ENCODE measurements at regions of chr6 and their contacts with region 1.

Region 1: GRCh38 chr6:139375232-139376016 is 976 bp upstream of the CITED2 start:
- DNase-seq: peak; percentile 81
- ATAC-seq: peak; percentile 51
- H3K4me3 Mint-ChIP-seq: peak overlapping the region; percentile 99
- H3K27ac Mint-ChIP-seq: peak overlapping the region; percentile 95
- H3K4me1 Mint-ChIP-seq: peaks cover 27% of the 10 kb centered on the region
- H3K27me3 Mint-ChIP-seq: no peaks in the 10 kb centered on the region
- CTCF ChIP-seq: no peak

Region 2: GRCh38 chr6:138773177-138774091 is 602.0 kb before region 1 on chr6 and contains the start of gene CCDC28A:
- CTCF ChIA-PET with region 1: no interaction called
- POLR2A ChIA-PET with region 1: interaction called, 19 read pairs
- intact Hi-C with region 1: loop called (anchors 1 kb)
- DNase-seq: peak; percentile 90
- ATAC-seq: peak; percentile 85
- H3K4me3 Mint-ChIP-seq: peak within 1 kb of the TSS; percentile 100
- H3K27ac Mint-ChIP-seq: peak within 1 kb of the TSS; percentile 100
- H3K4me1 Mint-ChIP-seq: peaks cover 28% of the 10 kb centered on the region
- H3K27me3 Mint-ChIP-seq: no peaks in the 10 kb centered on the region
- CTCF ChIP-seq: no peak
- total RNA-seq, gene CCDC28A: 14.0 and 14.6 TPM in 2 replicates

Region 3: DNA sequence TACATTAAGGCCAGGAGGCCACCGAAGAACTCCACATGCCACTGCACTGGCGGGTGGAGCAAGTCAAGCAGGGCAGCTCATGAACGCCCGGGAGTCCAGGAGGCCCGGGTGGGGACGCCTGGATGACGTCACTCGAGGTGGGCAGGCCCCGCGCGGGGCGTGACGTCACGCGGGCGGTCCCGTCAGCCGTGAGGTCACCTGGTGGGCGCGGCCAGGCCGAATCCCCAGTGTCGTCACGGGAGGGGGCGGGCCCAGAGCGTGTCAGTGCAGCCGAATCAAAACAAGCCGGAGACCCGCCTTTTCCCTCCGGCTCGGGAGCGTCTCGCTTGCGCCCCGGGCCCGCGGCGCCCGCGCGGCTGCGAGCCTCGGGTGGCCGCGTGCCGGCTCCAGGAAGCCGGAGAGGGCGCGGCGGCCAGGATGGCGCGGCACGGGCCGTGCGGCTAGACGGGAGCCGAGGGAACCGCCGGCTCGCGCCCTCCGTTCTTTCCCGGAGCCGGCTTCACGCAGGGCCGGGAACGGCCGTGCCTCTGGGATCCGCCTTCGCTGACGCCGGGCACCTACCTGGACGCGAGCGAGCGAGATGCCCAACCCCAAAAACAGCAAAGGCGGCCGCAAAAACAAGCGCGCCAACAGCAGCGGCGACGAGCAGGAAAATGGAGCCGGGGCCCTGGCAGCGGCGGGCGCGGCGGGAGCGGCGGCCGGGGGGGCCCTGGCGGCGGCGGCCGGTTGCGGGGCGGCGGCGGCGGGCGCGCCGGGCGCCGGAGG is 240.4 kb before region 1 on chr6 and contains the start of gene HECA:
- CTCF ChIA-PET with region 1: interaction called, 11 read pairs
- POLR2A ChIA-PET with region 1: interaction called, 38 read pairs
- intact Hi-C with region 1: loop called (anchors 1 kb)
- DNase-seq: peak; percentile 99
- ATAC-seq: peak; percentile 73
- H3K4me3 Mint-ChIP-seq: peak within 1 kb of the TSS; percentile 95
- H3K27ac Mint-ChIP-seq: peak within 1 kb of the TSS; percentile 98
- H3K4me1 Mint-ChIP-seq: peaks cover 79% of the 10 kb centered on the region
- H3K27me3 Mint-ChIP-seq: no peaks in the 10 kb centered on the region
- CTCF ChIP-seq: no peak
- total RNA-seq, gene HECA: 34.9 and 38.3 TPM in 2 replicates

Region 4: DNA sequence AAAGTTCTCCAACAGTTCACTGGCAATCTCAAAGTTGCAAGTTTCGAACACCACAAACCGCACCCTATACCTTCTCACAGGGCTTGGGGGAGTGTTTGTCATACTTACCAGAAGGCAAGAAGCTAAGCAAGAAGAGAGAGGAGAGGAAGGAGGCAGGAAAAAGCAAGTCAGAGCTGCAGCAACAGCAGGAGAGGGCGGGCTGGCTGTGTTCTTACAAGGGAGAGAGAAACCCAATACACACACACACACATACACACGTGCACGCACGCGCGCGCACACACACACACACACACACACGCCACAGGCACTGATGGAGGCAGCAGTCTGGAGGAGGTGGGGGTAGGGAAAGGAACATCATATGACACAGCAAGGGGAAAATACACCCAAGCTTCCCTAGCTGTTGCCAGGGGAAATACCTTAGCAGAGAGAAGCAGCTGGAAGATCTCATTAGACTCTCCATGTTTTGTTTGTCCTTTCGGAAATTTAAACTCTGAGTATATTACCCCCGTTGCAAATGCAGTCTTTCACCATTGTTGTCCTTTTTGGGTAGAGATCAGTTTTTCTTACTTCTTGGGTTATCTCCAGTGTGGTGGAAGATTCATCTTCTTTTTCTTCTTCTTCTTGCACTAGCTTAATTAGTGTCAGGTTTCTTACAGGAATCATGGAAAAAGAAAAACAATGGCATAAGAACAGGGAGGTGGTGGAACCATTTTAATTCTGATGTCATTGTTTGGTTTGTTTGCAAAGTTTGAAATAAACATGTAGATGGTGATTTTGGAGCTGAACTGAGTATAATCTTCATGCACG is 83.4 kb before region 1 on chr6 and contains the start of gene TXLNB:
- CTCF ChIA-PET with region 1: interaction called, 3 read pairs
- POLR2A ChIA-PET with region 1: interaction called, 36 read pairs
- intact Hi-C with region 1: no loop called
- DNase-seq: no peak
- ATAC-seq: peak; percentile 59
- H3K4me3 Mint-ChIP-seq: peak within 1 kb of the TSS; percentile 76
- H3K27ac Mint-ChIP-seq: peak within 1 kb of the TSS; percentile 96
- H3K4me1 Mint-ChIP-seq: peaks cover 76% of the 10 kb centered on the region
- H3K27me3 Mint-ChIP-seq: no peaks in the 10 kb centered on the region
- CTCF ChIP-seq: no peak
- total RNA-seq, gene TXLNB: 1.9 and 2.4 TPM in 2 replicates

Region 5: GRCh38 chr6:139334806-139335446 is 40.5 kb before region 1 on chr6:
- CTCF ChIA-PET with region 1: no interaction called
- POLR2A ChIA-PET with region 1: no interaction called
- intact Hi-C with region 1: no loop called
- DNase-seq: no peak
- ATAC-seq: no peak
- H3K4me3 Mint-ChIP-seq: no peak overlapping the region
- H3K27ac Mint-ChIP-seq: no peak overlapping the region
- H3K4me1 Mint-ChIP-seq: peaks cover 9% of the 10 kb centered on the region
- H3K27me3 Mint-ChIP-seq: no peaks in the 10 kb centered on the region
- CTCF ChIP-seq: no peak

Region 6: DNA sequence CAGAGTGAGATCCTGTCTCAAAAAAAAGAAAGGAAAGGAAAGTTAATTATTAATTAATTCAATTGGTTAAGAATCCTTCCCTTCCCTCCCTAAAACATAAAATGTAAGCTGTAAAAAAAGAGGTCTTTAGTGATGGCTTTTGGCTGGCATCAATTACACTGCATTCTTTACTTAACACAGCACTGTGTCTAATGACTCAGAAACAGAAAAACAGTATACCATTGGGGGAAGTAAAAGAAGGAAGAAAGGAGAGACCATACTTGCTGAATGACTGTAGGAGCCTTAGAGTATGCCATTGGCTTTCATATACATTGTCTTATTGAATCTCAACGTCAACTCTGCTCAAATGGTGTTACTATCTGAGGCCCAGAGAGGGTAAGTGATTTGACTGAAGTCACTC is 17.4 kb after region 1 on chr6:
- CTCF ChIA-PET with region 1: interaction called, 4 read pairs
- POLR2A ChIA-PET with region 1: interaction called, 39 read pairs
- intact Hi-C with region 1: loop called (anchors 1 kb)
- DNase-seq: no peak
- ATAC-seq: peak; percentile 95
- H3K4me3 Mint-ChIP-seq: peak overlapping the region; percentile 35
- H3K27ac Mint-ChIP-seq: no peak overlapping the region
- H3K4me1 Mint-ChIP-seq: peaks cover 10% of the 10 kb centered on the region
- H3K27me3 Mint-ChIP-seq: no peaks in the 10 kb centered on the region
- CTCF ChIP-seq: no peak

Region 7: GRCh38 chr6:140921366-140922226 is 1546.2 kb after region 1 on chr6:
- CTCF ChIA-PET with region 1: no interaction called
- POLR2A ChIA-PET with region 1: no interaction called
- intact Hi-C with region 1: loop called (anchors 2 kb)
- DNase-seq: no peak
- ATAC-seq: no peak
- H3K4me3 Mint-ChIP-seq: no peak overlapping the region
- H3K27ac Mint-ChIP-seq: no peak overlapping the region
- H3K4me1 Mint-ChIP-seq: no peaks in the 10 kb centered on the region
- H3K27me3 Mint-ChIP-seq: no peaks in the 10 kb centered on the region
- CTCF ChIP-seq: no peak